WTC11 (cell line): ENCODE measurements at regions of chr11 and their contacts with region 1.

Region 1: GRCh38 chr11:123137431-123138224 is 57.4 kb downstream of the CLMP start:
- DNase-seq: peak; percentile 78
- ATAC-seq: peak; percentile 93
- H3K4me3 Mint-ChIP-seq: peak overlapping the region; percentile 55
- H3K27ac Mint-ChIP-seq: peak overlapping the region; percentile 98
- H3K4me1 Mint-ChIP-seq: peaks cover 24% of the 10 kb centered on the region
- H3K27me3 Mint-ChIP-seq: no peaks in the 10 kb centered on the region
- CTCF ChIP-seq: no peak

Region 2: GRCh38 chr11:122917311-122917710 is 220.3 kb before region 1 on chr11:
- CTCF ChIA-PET with region 1: no interaction called
- POLR2A ChIA-PET with region 1: no interaction called
- DNase-seq: no peak
- ATAC-seq: no peak
- H3K4me3 Mint-ChIP-seq: no peak overlapping the region
- H3K27ac Mint-ChIP-seq: no peak overlapping the region
- H3K4me1 Mint-ChIP-seq: peaks cover 13% of the 10 kb centered on the region
- H3K27me3 Mint-ChIP-seq: no peaks in the 10 kb centered on the region
- CTCF ChIP-seq: no peak

Region 3: DNA sequence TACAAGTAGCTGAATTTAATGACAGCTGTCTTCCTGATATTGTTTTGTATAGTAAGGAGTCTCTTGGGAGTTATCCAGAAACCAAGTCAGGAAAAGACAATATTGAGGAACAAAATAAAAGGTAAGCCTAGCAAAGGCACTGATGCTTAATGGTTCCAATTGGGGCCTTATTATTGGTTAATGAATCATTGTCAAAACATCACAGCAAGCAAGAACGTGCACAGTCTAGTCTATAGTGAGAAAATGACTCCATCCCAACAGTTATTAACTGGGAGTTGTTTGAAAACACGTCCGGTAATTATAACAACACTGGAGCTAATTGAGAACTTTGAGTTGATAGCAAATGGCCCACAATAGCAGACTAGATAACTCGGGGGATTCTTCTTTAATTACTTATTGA is 173.7 kb before region 1 on chr11:
- CTCF ChIA-PET with region 1: no interaction called
- POLR2A ChIA-PET with region 1: interaction called, 10 read pairs
- DNase-seq: no peak
- ATAC-seq: no peak
- H3K4me3 Mint-ChIP-seq: no peak overlapping the region
- H3K27ac Mint-ChIP-seq: no peak overlapping the region
- H3K4me1 Mint-ChIP-seq: 0 out of 2 replicates have a peak, but pooled peaks cover 2% of the 10 kb centered on the region
- H3K27me3 Mint-ChIP-seq: peaks cover 16% of the 10 kb centered on the region
- CTCF ChIP-seq: no peak

Region 4: GRCh38 chr11:123110356-123110755 is 27.3 kb before region 1 on chr11:
- CTCF ChIA-PET with region 1: interaction called, 13 read pairs
- POLR2A ChIA-PET with region 1: interaction called, 3 read pairs
- DNase-seq: no peak
- ATAC-seq: no peak
- H3K4me3 Mint-ChIP-seq: no peak overlapping the region
- H3K27ac Mint-ChIP-seq: no peak overlapping the region
- H3K4me1 Mint-ChIP-seq: peaks cover 3% of the 10 kb centered on the region
- H3K27me3 Mint-ChIP-seq: no peaks in the 10 kb centered on the region
- CTCF ChIP-seq: no peak